ENCODE measurements at regions of chr20 and their contacts with region 1.

Region 1: DNA sequence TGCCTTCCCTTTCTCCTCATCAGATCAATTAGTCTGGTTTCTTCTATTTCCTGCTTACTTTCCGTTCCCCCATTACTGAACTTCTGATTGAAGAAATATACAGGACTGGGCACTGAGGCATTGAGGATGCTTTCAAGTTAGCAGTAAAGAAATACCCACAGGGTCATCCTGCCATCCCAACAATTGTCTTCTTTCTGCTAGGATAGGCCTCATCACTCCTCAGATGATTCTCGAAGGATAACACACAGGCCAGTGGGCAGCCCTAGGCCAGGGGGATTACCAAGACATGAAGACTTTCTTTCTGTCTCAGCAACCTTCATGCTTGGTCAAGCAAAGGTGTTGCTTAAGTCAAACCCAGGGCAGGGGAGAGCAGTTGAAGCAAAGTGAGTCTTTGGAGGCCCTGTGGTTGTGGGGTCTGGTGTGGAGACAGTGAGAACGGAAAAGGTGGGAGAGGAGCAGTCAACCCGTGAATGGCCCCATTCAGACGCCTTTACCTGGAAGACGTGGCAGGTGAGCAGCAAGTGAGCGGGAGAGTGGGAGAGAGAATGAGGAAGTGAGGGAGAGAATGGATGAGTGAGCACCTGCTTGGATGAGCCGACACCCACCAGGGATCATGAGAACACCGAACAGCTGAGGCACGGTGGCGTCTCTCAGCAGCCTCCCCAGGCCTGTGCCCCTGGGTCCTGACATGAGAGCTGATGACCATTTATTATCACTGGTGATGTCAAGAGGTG is 462.9 kb downstream of the PREX1 start:
- DNase-seq: no peak
- H3K4me3 ChIP-seq: no peak overlapping the region
- H3K27ac ChIP-seq: no peak overlapping the region
- H3K4me1 ChIP-seq: peaks cover 12 to 24% (median 23%) of the 10 kb centered on the region in 4 donors
- H3K27me3 ChIP-seq: no peaks in the 10 kb centered on the region
- CTCF ChIP-seq: no peak
- EP300 ChIP-seq: no peak
- POLR2A ChIP-seq: no peak

Region 2: DNA sequence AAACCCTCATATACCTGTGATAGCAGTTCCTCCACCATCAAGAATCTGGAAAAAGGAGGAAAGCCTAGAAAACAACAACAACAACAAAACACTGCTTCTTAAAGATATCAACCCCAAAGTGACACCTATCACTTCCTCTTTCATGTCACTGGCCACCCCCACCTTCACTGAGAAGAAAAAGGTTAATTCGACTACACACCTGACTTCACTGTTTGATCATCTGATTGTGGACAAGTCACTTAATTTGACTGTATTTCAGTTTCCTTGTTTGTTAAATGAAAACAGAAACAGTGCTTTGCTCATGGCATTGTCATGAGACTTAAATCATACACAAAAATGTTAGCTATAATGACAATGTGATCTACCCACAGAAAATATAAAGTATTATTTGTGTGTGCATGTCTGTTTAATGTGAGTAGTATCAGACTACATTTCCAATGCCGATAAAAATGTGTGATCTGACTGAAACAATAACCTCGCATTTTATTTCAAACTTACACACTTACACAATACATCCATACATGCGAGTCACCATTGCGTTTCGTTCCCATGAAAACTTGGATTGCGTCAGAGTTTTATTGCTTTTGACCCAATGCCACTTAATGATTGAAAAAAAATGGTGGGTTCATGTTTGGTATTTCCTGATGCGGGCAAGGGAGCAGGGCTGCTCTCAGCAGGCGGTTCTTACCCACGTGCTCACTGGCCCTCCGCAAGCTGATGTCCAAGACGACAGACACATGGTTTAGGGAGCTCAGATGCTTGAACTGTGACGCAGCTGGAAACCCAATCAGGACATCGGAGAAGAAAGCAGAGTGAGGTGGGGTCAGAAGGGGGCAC is 298.8 kb before region 1 on chr20:
- intact Hi-C with region 1: no loop called
- DNase-seq: no peak
- H3K4me3 ChIP-seq: no peak overlapping the region
- H3K27ac ChIP-seq: no peak overlapping the region
- H3K4me1 ChIP-seq: peaks cover 0 to 23% (median 7%) of the 10 kb centered on the region in 4 donors
- H3K27me3 ChIP-seq: no peaks in the 10 kb centered on the region
- CTCF ChIP-seq: no peak
- EP300 ChIP-seq: no peak
- POLR2A ChIP-seq: no peak

Region 3: GRCh38 chr20:48302858-48303542 is 61.9 kb before region 1 on chr20:
- intact Hi-C with region 1: loop called (anchors 5 kb)
- DNase-seq: no peak
- H3K4me3 ChIP-seq: no peak overlapping the region
- H3K27ac ChIP-seq: no peak overlapping the region
- H3K4me1 ChIP-seq: peaks cover 7 to 28% (median 18%) of the 10 kb centered on the region in 4 donors
- H3K27me3 ChIP-seq: no peaks in the 10 kb centered on the region
- CTCF ChIP-seq: no peak
- EP300 ChIP-seq: no peak
- POLR2A ChIP-seq: no peak

Region 4: DNA sequence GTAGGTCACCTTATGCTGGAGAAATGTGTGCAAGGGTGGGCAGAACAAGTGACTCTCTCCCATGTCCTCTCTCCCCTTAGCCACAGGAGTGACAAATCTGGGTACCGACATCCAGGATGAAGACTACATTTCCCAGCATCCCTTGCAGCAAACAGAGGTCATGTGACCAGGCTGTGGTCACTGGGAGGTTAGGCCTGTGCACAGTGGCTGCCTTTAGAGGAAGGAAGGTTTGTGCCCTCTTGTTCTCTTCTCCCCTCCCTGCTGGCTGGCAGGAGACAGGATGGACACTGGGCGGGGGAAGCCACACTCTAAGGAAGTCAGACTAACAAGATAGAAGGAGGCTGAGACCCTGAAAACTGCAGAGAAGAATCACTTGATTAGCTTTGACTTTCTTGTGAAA is 102.8 kb after region 1 on chr20:
- intact Hi-C with region 1: no loop called
- DNase-seq: no peak
- H3K4me3 ChIP-seq: no peak overlapping the region
- H3K27ac ChIP-seq: no peak overlapping the region
- H3K4me1 ChIP-seq: peaks cover 0 to 15% (median 11%) of the 10 kb centered on the region in 4 donors
- H3K27me3 ChIP-seq: peaks cover 0 to 14% (median 0%) of the 10 kb centered on the region in 4 donors
- CTCF ChIP-seq: no peak
- EP300 ChIP-seq: no peak
- POLR2A ChIP-seq: no peak

Region 5: DNA sequence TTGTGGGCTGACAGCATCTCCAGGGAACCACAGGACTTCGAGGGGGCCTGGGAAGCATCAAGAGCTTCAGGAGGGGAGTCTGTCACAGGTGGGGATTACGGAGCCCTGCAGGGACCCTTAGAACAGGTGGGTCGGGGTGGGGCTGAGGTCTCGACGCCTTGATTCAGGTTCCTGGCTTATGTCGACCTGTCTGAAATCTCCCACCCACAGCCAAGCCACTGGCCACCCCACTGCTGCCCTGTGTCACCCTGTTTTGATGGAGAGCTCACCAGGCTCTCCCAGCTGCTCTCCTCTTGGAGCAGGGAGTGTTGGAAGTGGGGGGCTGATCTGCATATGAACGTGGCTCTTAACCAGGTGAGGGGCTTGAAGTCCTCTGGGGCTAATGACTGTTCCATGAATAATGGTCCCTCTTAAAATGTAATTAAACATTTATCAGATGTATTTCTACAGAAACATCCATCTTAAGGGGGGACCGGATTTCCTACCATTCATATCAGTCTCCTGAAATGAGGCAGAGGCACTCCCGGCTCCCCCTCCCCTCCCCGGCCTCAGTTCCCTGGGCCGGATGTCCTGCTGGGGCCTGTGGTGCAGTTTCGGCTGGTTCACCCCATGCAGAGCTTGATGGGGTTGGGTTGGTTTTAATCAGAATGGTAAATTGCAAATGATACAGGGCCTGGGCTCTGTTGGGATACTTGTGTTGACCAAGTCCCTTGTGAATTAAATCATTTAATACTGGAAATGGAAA is 113.3 kb after region 1 on chr20:
- intact Hi-C with region 1: no loop called
- DNase-seq: no peak
- H3K4me3 ChIP-seq: no peak overlapping the region
- H3K27ac ChIP-seq: no peak overlapping the region
- H3K4me1 ChIP-seq: no peaks in the 10 kb centered on the region
- H3K27me3 ChIP-seq: peaks cover 0 to 32% (median 0%) of the 10 kb centered on the region in 4 donors
- CTCF ChIP-seq: no peak
- EP300 ChIP-seq: no peak
- POLR2A ChIP-seq: no peak

Measured in esophagus muscularis mucosa (tissue), 4 donors.